ENCODE measurements at regions of chr5 and their contacts with region 1.

Region 1: GRCh38 chr5:81301271-81302015 is at the start of gene ZCCHC9:
- DNase-seq: peak; percentile 84
- H3K4me3 ChIP-seq: peak within 1 kb of the TSS; percentile 99
- H3K27ac ChIP-seq: peak within 1 kb of the TSS; percentile 97
- H3K27me3 ChIP-seq: no peaks in the 10 kb centered on the region
- CTCF ChIP-seq: peak; percentile 39
- polyA plus RNA-seq, gene ZCCHC9: 23.3 and 35.4 TPM in 2 replicates

Region 2: DNA sequence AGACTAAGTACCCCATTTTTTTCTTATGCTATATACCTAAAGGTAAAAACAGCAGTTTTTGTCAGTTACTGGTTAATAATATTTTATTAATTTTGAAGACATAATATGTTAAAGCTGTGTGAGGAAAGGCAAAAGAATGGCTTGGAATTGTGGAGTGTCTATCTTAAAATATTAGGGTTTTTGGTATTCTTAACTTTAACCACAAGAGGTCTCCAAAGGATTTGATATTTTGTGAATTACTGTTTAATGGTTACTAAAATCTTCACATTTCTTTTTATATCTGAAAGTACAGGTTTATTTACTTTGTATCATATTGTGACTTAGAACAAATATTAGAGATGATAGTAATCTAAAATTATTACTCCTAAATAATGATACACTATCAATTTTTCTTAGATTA is 614.7 kb before region 1 on chr5:
- CTCF ChIA-PET with region 1: interaction called, 23 read pairs
- POLR2A ChIA-PET with region 1: no interaction called
- DNase-seq: no peak
- H3K4me3 ChIP-seq: no peak overlapping the region
- H3K27ac ChIP-seq: no peak overlapping the region
- H3K27me3 ChIP-seq: no peaks in the 10 kb centered on the region
- CTCF ChIP-seq: peak; percentile 44

Region 3: GRCh38 chr5:81268521-81269196 is 32.8 kb before region 1 on chr5:
- CTCF ChIA-PET with region 1: interaction called, 22 read pairs
- POLR2A ChIA-PET with region 1: no interaction called
- DNase-seq: peak; percentile 49
- H3K4me3 ChIP-seq: no peak overlapping the region
- H3K27ac ChIP-seq: peak overlapping the region; percentile 68
- H3K27me3 ChIP-seq: no peaks in the 10 kb centered on the region
- CTCF ChIP-seq: no peak

Region 4: DNA sequence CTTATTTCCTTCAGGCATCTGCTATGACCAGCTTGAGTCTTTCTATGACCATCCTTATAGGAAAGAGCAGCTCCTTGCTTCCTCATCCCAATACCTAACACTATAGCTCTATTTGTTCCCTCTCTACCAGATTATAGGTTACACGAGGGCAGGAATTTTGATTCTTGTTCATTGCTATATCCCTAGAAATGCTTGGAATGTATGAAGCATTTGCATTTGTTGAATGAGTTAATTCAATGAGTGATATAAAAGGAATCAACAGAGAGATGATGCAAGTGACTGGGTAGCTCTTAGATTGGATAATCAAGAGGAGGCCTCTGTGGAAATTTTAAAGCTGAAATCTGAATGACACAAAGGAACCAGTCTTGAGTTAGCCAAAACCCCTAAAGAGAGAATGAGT is 13.9 kb after region 1 on chr5:
- CTCF ChIA-PET with region 1: interaction called, 15 read pairs
- POLR2A ChIA-PET with region 1: interaction called, 25 read pairs
- DNase-seq: peak; percentile 39
- H3K4me3 ChIP-seq: no peak overlapping the region
- H3K27ac ChIP-seq: peak overlapping the region; percentile 40
- H3K27me3 ChIP-seq: no peaks in the 10 kb centered on the region
- CTCF ChIP-seq: no peak

Region 5: GRCh38 chr5:81393783-81394718 is 92.6 kb after region 1 on chr5 and contains the start of gene ACOT12:
- CTCF ChIA-PET with region 1: interaction called, 10 read pairs
- POLR2A ChIA-PET with region 1: no interaction called
- DNase-seq: no peak
- H3K4me3 ChIP-seq: peak within 1 kb of the TSS; percentile 55
- H3K27ac ChIP-seq: no peak within 1 kb of the TSS
- H3K27me3 ChIP-seq: peaks cover 3% of the 10 kb centered on the region
- CTCF ChIP-seq: no peak
- polyA plus RNA-seq, gene ACOT12: 0.56 and 0.58 TPM in 2 replicates

Measured in AG04450 (cell line).